Activated T-helper 1 cell treated with anti-CD3 and anti-CD28 coated beads, Interleukin-12 subunit alpha, Interleukin-12 subunit beta, Interleukin-2, Interleukin-4 antibody, amounts not matched to agents 30 ng/mL and 10 ng/mL and 1 ng/mL, durations not matched to agents 14 hours and 24 hours and 36 hours (primary cell): ENCODE measurements at regions of chr6 and their contacts with region 1.

Region 1: GRCh38 chr6:117602151-117602898 is at the start of gene GOPC:
- DNase-seq: peak; percentile 94
- H3K4me3 Mint-ChIP-seq: peak within 1 kb of the TSS; percentile 99
- H3K27ac Mint-ChIP-seq: peak within 1 kb of the TSS; percentile 100
- H3K4me1 Mint-ChIP-seq: peaks cover 44% of the 10 kb centered on the region
- H3K27me3 Mint-ChIP-seq: peaks cover 2% of the 10 kb centered on the region
- total RNA-seq, gene GOPC: 23.6 and 24.3 TPM in 2 replicates

Region 2: GRCh38 chr6:116570856-116571682 is 1031.3 kb before region 1 on chr6 and contains the start of gene RWDD1:
- intact Hi-C with region 1: loop called (anchors 2 kb)
- DNase-seq: peak; percentile 98
- H3K4me3 Mint-ChIP-seq: peak within 1 kb of the TSS; percentile 99
- H3K27ac Mint-ChIP-seq: peak within 1 kb of the TSS; percentile 97
- H3K4me1 Mint-ChIP-seq: peaks cover 54% of the 10 kb centered on the region
- H3K27me3 Mint-ChIP-seq: peaks cover 13% of the 10 kb centered on the region
- total RNA-seq, gene RWDD1: 41.4 and 41.5 TPM in 2 replicates

Region 3: DNA sequence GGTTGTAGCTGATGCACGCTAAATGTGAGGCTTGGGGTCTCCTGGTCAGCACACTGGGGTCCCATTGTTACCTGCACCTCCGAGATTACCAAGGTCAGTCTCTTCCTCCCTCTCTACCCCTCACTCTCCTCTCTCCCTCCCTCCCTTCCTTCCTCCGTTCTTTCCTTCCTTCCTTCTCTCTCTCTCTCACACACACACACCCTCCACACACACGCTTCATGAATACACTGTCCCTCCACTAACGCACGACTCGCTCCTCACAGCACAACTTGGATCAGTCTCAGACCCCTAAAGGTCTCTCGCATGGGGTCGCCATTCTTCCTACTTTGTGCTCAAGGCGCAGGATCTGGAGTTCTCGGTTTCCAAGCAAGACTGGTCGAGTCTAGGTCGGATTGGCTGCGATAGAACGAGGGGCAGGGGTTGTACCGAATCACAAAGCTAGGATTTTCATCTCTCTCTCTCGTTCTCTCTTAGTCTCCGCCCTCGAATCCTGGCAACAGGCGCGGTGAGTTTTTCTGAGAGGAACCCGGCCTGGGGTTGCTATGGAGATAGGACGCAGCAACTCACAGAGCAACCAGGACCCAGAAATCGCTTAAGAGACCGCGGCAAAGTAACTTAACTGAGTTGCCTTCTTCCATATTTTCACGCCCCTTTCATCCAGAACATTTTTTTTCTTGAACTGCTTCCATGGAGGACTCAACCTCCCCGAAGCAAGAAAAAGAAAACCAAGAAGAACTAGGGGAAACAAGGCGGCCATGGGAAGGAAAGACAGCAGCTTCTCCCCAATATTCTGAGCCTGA is 986.2 kb before region 1 on chr6 and contains the start of gene RSPH4A:
- intact Hi-C with region 1: no loop called
- DNase-seq: peak; percentile 62
- H3K4me3 Mint-ChIP-seq: peak within 1 kb of the TSS; percentile 80
- H3K27ac Mint-ChIP-seq: no peak within 1 kb of the TSS
- H3K4me1 Mint-ChIP-seq: peaks cover 17% of the 10 kb centered on the region
- H3K27me3 Mint-ChIP-seq: peaks cover 41% of the 10 kb centered on the region
- total RNA-seq, gene RSPH4A: 0.36 TPM in 1 of 2 replicates, not detected in the other

Region 4: DNA sequence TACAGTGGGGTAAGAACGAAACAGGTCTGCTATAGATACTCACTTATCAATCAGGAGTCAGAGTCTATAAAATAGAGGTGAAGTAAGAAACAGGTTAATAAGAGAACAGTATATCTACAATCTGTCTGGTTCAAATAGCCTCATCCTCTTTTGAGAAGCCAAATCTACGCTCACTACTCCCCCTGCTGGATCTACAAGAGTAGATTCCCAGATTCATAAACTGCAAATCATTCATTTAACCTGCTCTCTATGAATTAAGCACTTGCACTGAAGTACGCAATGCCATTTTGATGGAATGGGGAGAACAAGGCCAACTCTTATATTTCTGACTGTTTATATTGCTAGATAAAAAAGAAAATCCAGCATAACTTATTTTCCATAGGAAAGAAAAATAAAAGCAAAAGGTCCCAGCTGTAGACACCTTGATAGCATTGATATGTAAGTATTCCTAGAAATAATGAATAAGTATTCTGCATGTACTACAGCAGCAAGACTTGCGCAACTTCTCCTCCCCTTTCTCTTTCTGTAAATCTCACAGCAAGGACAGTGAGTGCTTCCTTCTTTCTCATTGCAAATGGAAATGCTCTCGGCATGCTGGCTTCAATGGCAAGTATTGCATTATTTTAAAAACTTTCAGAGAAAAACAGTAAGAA is 633.0 kb before region 1 on chr6:
- intact Hi-C with region 1: loop called (anchors 2 kb)
- DNase-seq: no peak
- H3K4me3 Mint-ChIP-seq: no peak overlapping the region
- H3K27ac Mint-ChIP-seq: no peak overlapping the region
- H3K4me1 Mint-ChIP-seq: no peaks in the 10 kb centered on the region
- H3K27me3 Mint-ChIP-seq: no peaks in the 10 kb centered on the region

Region 5: DNA sequence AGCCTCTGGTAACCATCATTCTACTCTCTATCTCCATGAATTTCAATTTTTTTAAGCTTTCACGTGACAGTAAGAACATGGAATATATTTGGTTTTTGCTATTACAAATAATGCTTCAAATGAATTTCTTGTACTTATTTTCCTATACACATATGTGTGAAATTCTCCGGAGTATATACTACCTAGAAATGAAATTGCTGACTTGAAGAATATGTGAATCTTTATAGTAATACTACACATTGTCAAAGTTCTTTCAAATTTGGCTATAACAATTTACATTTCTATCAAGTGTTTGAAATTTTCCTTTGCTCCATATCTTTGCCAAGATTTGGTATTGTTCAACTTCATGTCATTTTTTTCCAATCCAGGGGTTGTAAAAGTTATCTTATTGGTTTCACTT is 348.5 kb before region 1 on chr6:
- intact Hi-C with region 1: no loop called
- DNase-seq: no peak
- H3K4me3 Mint-ChIP-seq: no peak overlapping the region
- H3K27ac Mint-ChIP-seq: no peak overlapping the region
- H3K4me1 Mint-ChIP-seq: no peaks in the 10 kb centered on the region
- H3K27me3 Mint-ChIP-seq: peaks cover 2% of the 10 kb centered on the region

Region 6: GRCh38 chr6:117482240-117483003 is 119.9 kb before region 1 on chr6 and contains the start of gene DCBLD1:
- intact Hi-C with region 1: loop called (anchors 1 kb)
- DNase-seq: peak; percentile 55
- H3K4me3 Mint-ChIP-seq: peak within 1 kb of the TSS; percentile 95
- H3K27ac Mint-ChIP-seq: peak within 1 kb of the TSS; percentile 91
- H3K4me1 Mint-ChIP-seq: peaks cover 25% of the 10 kb centered on the region
- H3K27me3 Mint-ChIP-seq: peaks cover 44% of the 10 kb centered on the region
- total RNA-seq, gene DCBLD1: 3.9 and 4.5 TPM in 2 replicates

Region 7: DNA sequence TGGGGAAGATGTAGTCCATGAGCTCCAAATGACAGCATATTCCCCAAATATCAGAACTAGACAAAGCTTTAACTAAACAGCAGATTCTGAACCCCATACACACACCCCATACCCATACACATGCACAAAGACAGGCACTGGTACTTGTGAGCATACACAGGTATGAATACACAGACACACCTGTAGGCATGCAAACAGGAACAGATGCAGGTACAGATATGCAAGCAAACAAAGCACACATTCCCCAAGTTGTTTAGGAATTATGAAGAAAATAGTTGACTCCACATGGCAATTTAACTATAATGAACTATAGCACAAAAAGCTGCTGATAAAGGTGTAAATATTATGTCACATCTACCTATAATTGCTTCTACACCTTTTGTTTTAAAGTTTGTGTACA is 16.7 kb before region 1 on chr6:
- intact Hi-C with region 1: loop called (anchors 2 kb)
- DNase-seq: no peak
- H3K4me3 Mint-ChIP-seq: no peak overlapping the region
- H3K27ac Mint-ChIP-seq: no peak overlapping the region
- H3K4me1 Mint-ChIP-seq: no peaks in the 10 kb centered on the region
- H3K27me3 Mint-ChIP-seq: no peaks in the 10 kb centered on the region

Region 8: DNA sequence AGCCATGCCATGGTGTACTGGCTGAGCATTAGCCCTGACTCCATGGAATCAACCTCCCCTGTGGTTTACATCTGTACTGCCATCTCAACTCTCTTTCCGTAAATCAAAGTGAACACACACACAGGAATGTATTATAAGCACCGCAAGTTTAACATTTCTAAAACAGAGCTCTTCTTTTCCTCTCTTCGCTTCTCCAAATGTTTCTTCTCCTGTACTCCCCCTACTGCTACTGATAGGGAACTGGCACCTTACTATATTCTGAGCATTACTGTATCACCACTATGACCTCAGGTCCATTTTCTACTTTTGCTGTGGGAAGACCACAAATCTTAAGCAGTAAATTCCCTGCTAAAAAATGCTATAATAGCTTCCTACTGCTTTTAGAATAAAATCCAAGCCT is 174.1 kb after region 1 on chr6:
- intact Hi-C with region 1: no loop called
- DNase-seq: no peak
- H3K4me3 Mint-ChIP-seq: no peak overlapping the region
- H3K27ac Mint-ChIP-seq: no peak overlapping the region
- H3K4me1 Mint-ChIP-seq: no peaks in the 10 kb centered on the region
- H3K27me3 Mint-ChIP-seq: peaks cover 2% of the 10 kb centered on the region